ENCODE measurements at regions of chr12 and their contacts with region 1.

Region 1: DNA sequence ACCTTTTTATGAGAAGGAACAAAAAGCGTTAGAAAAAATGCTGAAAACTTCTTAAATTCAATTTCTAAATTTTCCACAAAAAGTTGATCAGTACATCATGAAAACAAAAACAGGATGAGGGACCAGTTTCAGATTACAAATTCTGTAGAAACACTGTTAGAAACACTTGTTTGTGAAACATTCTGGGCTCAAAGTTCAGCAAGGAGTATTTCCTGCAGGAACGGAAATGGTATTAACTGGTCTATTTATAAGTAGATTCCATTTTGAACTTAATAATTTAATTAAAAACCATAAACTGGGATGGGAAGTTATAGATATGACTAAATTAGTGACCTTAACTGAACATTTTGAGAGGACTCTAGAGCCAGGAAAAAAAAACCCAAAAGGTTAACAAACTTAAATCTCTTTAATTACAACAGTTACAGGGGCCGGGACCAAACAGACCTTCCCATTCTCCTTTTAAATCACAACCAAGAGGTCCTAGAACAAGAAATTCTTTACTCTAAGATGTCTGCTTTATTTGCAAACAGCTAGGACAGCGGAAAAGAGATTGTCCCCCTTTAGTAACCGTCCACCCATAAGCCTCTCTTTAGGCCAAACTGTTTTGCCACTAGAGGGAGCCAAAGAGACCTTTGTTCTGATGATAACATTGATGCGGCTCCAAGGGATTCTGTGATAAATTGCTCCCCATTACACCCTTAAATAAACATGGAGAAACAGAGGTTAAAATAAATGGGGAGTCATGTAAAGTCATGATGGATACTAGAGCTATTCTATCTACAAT is 69.0 kb upstream of the RERGL start:
- DNase-seq: peak; percentile 37
- H3K4me3 Mint-ChIP-seq: no peak overlapping the region
- H3K27ac Mint-ChIP-seq: no peak overlapping the region
- H3K4me1 Mint-ChIP-seq: no peaks in the 10 kb centered on the region
- H3K27me3 Mint-ChIP-seq: no peaks in the 10 kb centered on the region

Region 2: GRCh38 chr12:18224745-18225144 is 65.8 kb after region 1 on chr12:
- CTCF ChIA-PET with region 1: no interaction called
- intact Hi-C with region 1: loop called (anchors 1 kb)
- DNase-seq: no peak
- H3K4me3 Mint-ChIP-seq: no peak overlapping the region
- H3K27ac Mint-ChIP-seq: no peak overlapping the region
- H3K4me1 Mint-ChIP-seq: no peaks in the 10 kb centered on the region
- H3K27me3 Mint-ChIP-seq: no peaks in the 10 kb centered on the region

Region 3: GRCh38 chr12:19491863-19492262 is 1332.9 kb after region 1 on chr12:
- CTCF ChIA-PET with region 1: no interaction called
- intact Hi-C with region 1: no loop called
- DNase-seq: no peak
- H3K4me3 Mint-ChIP-seq: no peak overlapping the region
- H3K27ac Mint-ChIP-seq: no peak overlapping the region
- H3K4me1 Mint-ChIP-seq: peaks cover 26% of the 10 kb centered on the region
- H3K27me3 Mint-ChIP-seq: no peaks in the 10 kb centered on the region

Measured in activated naive CD4-positive, alpha-beta T cell treated with anti-CD3 and anti-CD28 coated beads for 36 hours (primary cell).